CD4-positive, alpha-beta T cell (primary cell): ENCODE measurements at regions of chr6 and their contacts with region 1.

Region 1: DNA sequence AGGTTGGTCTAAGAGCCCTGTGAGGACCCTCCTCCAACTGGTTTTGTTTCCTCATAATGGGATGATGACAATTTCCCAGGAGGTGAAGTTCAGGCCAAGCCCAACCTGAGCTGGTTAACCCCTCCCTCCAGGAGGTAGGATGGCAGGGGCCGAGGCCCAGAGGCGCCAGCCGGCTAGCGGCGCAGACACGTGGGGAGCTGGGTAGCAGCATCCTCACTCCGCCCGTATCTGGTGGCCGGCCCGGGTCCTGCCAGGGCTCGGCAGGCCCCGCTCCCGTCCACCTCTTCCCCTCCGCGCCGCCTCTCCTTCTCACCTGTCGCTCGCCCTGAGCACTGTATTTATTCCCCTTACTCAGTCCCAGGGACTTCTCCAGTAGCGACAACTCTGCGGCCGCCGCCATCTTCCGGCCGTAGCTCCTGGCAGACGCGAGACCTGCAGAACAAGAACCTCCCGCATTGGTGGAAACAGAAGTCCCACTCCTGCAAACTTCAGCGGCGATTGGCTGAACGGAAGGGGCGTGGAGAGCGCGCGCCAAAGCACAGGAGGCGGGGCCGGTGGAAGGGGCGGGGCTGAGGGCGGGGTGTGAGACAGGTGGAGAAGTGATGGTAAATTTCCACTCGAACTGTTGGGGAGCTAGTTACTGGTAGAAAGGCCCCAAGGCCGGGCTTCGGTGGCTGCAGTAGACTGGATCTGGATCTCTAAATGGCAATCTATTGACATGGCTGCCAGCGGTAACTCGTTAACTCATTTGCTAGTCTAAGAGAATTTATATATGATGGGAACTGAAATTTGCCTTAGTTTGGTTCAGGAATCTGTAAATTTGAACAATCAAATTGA is at the start of gene EEF1E1:
- DNase-seq: peak; percentile 93 to 99 (median 97)
- ATAC-seq: peak; percentile 97
- H3K4me3 ChIP-seq: peak within 1 kb of the TSS; percentile 89
- H3K4me3 Mint-ChIP-seq: peak within 1 kb of the TSS; percentile 96
- H3K27ac ChIP-seq: peak within 1 kb of the TSS; percentile 69 to 73
- H3K27ac Mint-ChIP-seq: peak within 1 kb of the TSS; percentile 81
- H3K4me1 ChIP-seq: peaks cover 20% of the 10 kb centered on the region
- H3K4me1 Mint-ChIP-seq: peaks cover 31% of the 10 kb centered on the region
- H3K27me3 ChIP-seq: no peaks in the 10 kb centered on the region
- H3K27me3 Mint-ChIP-seq: peaks cover 25% of the 10 kb centered on the region
- CTCF ChIP-seq: no peak
- total RNA-seq, gene EEF1E1: 11.2 to 14.7 TPM

Region 2: GRCh38 chr6:8017276-8017701 is 85.1 kb before region 1 on chr6:
- CTCF ChIA-PET with region 1: no interaction called
- POLR2A ChIA-PET with region 1: interaction called, 10 read pairs
- intact Hi-C with region 1: no loop called
- DNase-seq: peak in 2 of 14 experiments; percentile 6 to 7
- ATAC-seq: peak; percentile 91
- H3K4me3 ChIP-seq: no peak overlapping the region
- H3K4me3 Mint-ChIP-seq: peak overlapping the region; percentile 88
- H3K27ac ChIP-seq: no peak overlapping the region
- H3K27ac Mint-ChIP-seq: peak overlapping the region; percentile 90
- H3K4me1 ChIP-seq: no peaks in the 10 kb centered on the region
- H3K4me1 Mint-ChIP-seq: peaks cover 22% of the 10 kb centered on the region
- H3K27me3 ChIP-seq: no peaks in the 10 kb centered on the region
- H3K27me3 Mint-ChIP-seq: no peaks in the 10 kb centered on the region
- CTCF ChIP-seq: no peak

Region 3: DNA sequence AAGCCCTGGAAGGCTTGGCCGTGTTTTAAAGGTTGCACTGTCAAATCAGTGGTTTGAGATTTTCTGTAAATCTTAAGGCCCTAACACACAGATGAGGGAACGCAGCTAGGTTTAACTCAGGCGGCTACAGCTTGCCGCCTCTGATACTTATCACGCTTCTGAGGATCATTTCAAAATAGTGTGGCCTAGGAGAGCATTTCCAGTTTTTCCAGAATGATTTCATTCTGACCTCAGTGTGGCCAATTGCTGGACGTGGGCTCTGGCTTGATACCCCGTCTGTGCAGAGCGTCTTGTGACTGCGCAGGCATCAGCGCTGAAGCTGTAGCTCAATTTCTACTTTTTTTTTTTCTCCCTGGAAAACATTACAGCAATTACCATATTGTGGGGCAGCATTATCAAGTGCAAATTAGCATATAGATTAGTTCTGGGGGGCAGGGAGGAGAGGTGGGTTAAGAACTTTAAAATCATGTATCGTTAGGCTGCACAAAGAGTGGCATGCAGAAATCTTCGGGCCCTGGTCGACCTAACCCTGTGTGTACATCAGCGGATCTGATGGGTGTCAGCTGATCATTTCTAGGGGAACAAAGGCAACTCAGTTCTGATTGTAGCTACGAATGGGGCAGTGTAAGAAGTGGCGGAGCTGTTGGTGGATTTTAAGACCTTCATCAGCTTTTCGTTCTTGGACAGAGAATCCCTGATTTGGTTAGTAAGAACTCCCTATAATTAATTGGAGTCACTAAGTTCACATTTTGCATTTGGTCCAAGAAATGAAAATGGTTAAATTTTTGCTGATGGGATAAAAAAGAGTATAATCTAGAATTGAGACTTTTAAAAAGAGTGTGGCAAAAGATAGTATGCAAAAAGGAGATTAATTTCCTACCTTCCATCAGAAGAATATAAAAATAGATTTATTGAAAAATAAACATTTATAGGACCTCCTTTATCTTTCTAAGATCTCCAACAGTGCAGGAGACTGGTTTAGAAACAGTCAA is 105.2 kb after region 1 on chr6:
- CTCF ChIA-PET with region 1: no interaction called
- POLR2A ChIA-PET with region 1: no interaction called
- intact Hi-C with region 1: no loop called
- DNase-seq: no peak
- ATAC-seq: no peak
- H3K4me3 ChIP-seq: no peak overlapping the region
- H3K4me3 Mint-ChIP-seq: no peak overlapping the region
- H3K27ac ChIP-seq: no peak overlapping the region
- H3K27ac Mint-ChIP-seq: no peak overlapping the region
- H3K4me1 ChIP-seq: no peaks in the 10 kb centered on the region
- H3K4me1 Mint-ChIP-seq: no peaks in the 10 kb centered on the region
- H3K27me3 ChIP-seq: peaks cover 0 to 5% of the 10 kb centered on the region in 2 experiments
- H3K27me3 Mint-ChIP-seq: peaks cover 30% of the 10 kb centered on the region
- CTCF ChIP-seq: no peak

Region 4: GRCh38 chr6:9266741-9267140 is 1164.4 kb after region 1 on chr6:
- CTCF ChIA-PET with region 1: no interaction called
- POLR2A ChIA-PET with region 1: no interaction called
- intact Hi-C with region 1: no loop called
- DNase-seq: no peak
- ATAC-seq: no peak
- H3K4me3 ChIP-seq: no peak overlapping the region
- H3K4me3 Mint-ChIP-seq: no peak overlapping the region
- H3K27ac ChIP-seq: no peak overlapping the region
- H3K27ac Mint-ChIP-seq: no peak overlapping the region
- H3K4me1 ChIP-seq: no peaks in the 10 kb centered on the region
- H3K4me1 Mint-ChIP-seq: no peaks in the 10 kb centered on the region
- H3K27me3 ChIP-seq: no peaks in the 10 kb centered on the region
- H3K27me3 Mint-ChIP-seq: peaks cover 4% of the 10 kb centered on the region
- CTCF ChIP-seq: no peak